Activated T-helper 1 cell treated with anti-CD3 and anti-CD28 coated beads, Interleukin-12 subunit alpha, Interleukin-12 subunit beta, Interleukin-2, Interleukin-4 antibody, amounts not matched to agents 30 ng/mL and 10 ng/mL and 1 ng/mL, durations not matched to agents 14 hours and 24 hours and 36 hours (primary cell): ENCODE measurements at regions of chr6 and their contacts with region 1.

Region 1: DNA sequence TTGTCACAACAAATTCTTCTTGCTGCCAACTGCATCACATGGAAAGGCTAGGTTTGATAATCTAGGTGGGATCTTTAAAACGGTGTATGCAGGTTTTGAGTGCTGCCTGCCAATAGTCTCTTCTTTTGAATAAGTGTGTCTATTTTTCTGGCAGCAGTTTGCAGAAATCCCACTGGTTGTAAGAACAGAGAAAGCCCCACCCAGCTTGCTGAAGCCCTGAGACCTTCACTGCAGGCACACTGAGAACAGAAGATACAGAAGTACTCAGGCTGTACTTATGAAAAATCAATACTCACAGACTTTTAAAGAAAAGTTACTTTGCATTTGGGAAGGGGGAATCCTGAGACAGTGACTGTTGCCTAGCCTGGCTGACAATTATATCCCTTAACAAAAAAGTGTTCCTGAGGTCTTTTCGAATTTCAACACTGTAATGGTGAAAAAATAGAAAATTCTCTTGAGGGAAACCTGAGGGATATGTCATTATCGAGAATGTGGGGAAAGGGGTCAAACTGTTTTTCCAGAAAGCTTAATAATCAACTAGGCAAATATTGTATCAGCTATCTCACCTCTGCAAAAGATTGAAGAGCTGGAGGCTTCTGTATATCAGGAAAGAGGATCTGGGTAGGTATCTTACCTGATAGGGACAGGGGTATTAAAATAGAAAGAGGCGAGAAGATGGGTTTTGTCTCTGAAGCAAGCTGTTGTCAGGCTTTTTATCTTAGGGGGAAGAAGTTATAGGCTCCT is 199.9 kb downstream of the LRFN2 start:
- DNase-seq: no peak
- H3K4me3 Mint-ChIP-seq: peak overlapping the region; percentile 20
- H3K27ac Mint-ChIP-seq: peak overlapping the region; percentile 67
- H3K4me1 Mint-ChIP-seq: peaks cover 67% of the 10 kb centered on the region
- H3K27me3 Mint-ChIP-seq: no peaks in the 10 kb centered on the region

Region 2: GRCh38 chr6:40371621-40372020 is 15.7 kb before region 1 on chr6:
- intact Hi-C with region 1: loop called (anchors 1 kb)
- DNase-seq: no peak
- H3K4me3 Mint-ChIP-seq: peak overlapping the region; percentile 71
- H3K27ac Mint-ChIP-seq: peak overlapping the region; percentile 93
- H3K4me1 Mint-ChIP-seq: peaks cover 64% of the 10 kb centered on the region
- H3K27me3 Mint-ChIP-seq: no peaks in the 10 kb centered on the region

Region 3: GRCh38 chr6:40436685-40437604 is 49.6 kb after region 1 on chr6:
- intact Hi-C with region 1: loop called (anchors 1 kb)
- DNase-seq: peak; percentile 49
- H3K4me3 Mint-ChIP-seq: peak overlapping the region; percentile 35
- H3K27ac Mint-ChIP-seq: peak overlapping the region; percentile 60
- H3K4me1 Mint-ChIP-seq: peaks cover 27% of the 10 kb centered on the region
- H3K27me3 Mint-ChIP-seq: peaks cover 8% of the 10 kb centered on the region

Region 4: DNA sequence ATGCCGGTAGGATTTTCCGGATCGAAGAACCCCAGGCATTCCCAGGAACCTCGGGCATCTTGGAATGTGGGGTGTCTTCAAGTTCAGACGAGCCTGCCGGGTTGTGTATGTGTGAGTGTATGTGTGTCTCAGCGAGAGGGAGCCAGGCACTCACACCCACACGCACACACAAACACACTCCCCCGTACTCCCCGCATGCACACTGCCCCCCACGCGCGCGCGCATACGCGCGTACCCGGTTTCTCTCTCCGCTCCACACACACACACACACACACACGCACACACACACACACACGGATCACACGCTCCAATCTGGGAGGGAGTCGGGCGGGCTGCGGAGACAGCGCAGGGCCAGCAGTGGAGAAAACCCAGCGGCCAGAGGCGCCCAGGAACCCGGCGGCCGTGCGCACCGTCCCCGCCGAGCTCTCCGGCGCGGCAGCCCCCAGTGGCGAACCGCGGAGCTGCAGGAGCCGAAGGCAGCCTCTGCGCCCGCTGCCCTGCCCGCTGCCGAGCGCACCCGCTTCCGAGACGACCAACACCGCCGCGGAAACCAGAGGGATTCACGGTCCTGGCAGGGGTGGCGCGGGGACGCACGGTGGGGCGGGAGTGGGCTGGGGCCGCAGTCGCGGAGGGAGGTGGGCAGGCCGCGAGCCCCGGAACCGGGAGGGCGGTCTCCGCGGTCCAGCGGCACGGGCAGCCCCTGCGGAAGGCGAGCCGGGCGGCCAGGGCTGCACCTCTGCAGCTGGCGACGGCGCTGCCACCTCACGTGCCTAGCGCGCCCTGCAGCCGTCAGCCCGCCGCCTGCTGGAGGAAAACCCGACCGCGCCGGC is 200.2 kb after region 1 on chr6 and contains the start of gene LRFN2:
- intact Hi-C with region 1: loop called (anchors 5 kb)
- DNase-seq: peak; percentile 71
- H3K4me3 Mint-ChIP-seq: peak within 1 kb of the TSS; percentile 86
- H3K27ac Mint-ChIP-seq: peak within 1 kb of the TSS; percentile 59
- H3K4me1 Mint-ChIP-seq: peaks cover 24% of the 10 kb centered on the region
- H3K27me3 Mint-ChIP-seq: peaks cover 49% of the 10 kb centered on the region
- total RNA-seq, gene LRFN2: 0.29 TPM in 2 replicates

Region 5: DNA sequence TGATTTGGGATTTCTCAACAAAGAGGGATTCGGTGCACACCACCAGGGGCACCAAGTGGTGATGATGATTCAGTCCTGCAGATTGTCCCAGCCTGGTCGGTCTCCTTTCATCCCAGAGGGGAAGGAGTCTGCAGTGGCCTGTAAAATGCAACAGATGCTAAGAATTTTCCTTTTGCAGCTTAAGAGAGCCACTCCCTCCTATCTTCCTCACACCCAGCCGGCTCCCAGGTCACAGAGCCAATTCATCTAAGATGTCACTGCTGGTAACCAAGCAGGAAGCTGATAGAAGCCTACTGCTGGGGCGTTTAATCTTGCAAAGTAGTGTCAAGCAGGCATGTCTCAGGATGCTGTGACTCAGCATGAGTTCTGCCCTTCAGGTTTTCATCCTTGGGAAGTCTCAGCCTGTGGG is 403.7 kb after region 1 on chr6:
- intact Hi-C with region 1: loop called (anchors 5 kb)
- DNase-seq: no peak
- H3K4me3 Mint-ChIP-seq: no peak overlapping the region
- H3K27ac Mint-ChIP-seq: no peak overlapping the region
- H3K4me1 Mint-ChIP-seq: peaks cover 44% of the 10 kb centered on the region
- H3K27me3 Mint-ChIP-seq: peaks cover 11% of the 10 kb centered on the region